Heart left ventricle (tissue), 16 donors: ENCODE measurements at regions of chr4 and their contacts with region 1.

Region 1: GRCh38 chr4:119314356-119314755 is 7.6 kb downstream of the FABP2 start:
- DNase-seq: no peak
- ATAC-seq: peak; percentile 75 to 85 (median 80)
- H3K4me3 ChIP-seq: no peak overlapping the region
- H3K27ac ChIP-seq: no peak overlapping the region
- H3K4me1 ChIP-seq: no peaks in the 10 kb centered on the region
- H3K27me3 ChIP-seq: no peaks in the 10 kb centered on the region
- CTCF ChIP-seq: peak; percentile 14 to 66 (median 56)
- POLR2A ChIP-seq: no peak

Region 2: GRCh38 chr4:119490335-119490734 is 176.0 kb after region 1 on chr4:
- intact Hi-C with region 1: loop called in 7 of 10 experiments (anchors 2 to 10 kb)
- DNase-seq: no peak
- ATAC-seq: peak in 2 of 4 donors; percentile 39 to 66
- H3K4me3 ChIP-seq: no peak overlapping the region
- H3K27ac ChIP-seq: no peak overlapping the region
- H3K4me1 ChIP-seq: no peaks in the 10 kb centered on the region
- H3K27me3 ChIP-seq: no peaks in the 10 kb centered on the region
- CTCF ChIP-seq: peak in 5 of 12 donors; percentile 15 to 39 (median 21)
- POLR2A ChIP-seq: no peak

Region 3: GRCh38 chr4:119498527-119498926 is 184.2 kb after region 1 on chr4:
- intact Hi-C with region 1: loop called in 7 of 10 experiments (anchors 2 to 10 kb)
- DNase-seq: peak in 2 of 5 donors; percentile 25 to 45
- ATAC-seq: peak in 3 of 4 donors; percentile 66 to 78 (median 75)
- H3K4me3 ChIP-seq: no peak overlapping the region
- H3K27ac ChIP-seq: peak overlapping the region in 9 of 12 donors; percentile 11 to 51 (median 32)
- H3K4me1 ChIP-seq: peaks cover 0 to 10% (median 0%) of the 10 kb centered on the region in 12 donors
- H3K27me3 ChIP-seq: no peaks in the 10 kb centered on the region
- CTCF ChIP-seq: no peak
- POLR2A ChIP-seq: no peak

Region 4: DNA sequence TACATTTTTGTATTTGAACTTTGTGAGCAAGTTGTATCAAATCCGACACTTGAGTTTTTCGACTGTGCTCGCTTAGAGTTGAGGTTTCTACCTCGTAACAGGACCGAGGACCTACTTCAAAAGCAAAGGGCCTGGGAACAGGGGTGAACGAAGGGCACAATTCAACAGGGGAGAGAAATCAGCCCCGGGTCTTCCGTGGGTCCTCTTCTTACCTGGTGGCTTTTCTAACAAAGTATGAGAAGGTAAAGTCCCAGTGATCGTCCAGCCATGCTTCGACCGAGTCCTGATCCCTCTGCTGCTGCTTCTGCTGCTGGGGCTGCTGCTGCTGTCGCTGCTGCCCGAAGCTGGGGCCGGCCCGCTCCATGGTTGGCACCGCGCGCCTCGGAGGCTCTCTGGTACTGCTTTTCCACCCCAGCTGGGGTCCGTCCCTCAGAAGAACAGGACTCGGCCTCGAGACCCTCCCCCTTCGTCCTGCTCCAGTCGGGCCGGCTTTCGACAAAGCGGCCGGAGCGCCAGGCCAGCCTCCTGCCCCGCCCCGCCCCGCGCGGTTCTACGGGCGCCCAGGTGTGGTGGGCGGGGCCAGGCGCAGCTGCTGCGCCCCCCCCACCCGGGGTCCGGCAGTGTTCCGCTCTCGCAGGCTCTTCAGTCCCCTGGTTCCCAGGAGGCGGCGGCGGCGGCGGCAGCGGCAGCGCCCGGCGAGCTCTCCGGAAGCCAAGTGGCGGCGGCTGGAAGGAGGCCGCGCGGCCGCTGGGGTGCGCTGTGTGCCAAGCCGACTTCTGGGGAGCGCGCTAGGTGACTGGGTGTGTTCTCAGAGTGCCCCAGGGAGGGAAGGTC is 314.2 kb after region 1 on chr4 and contains the start of gene PDE5A:
- intact Hi-C with region 1: loop called in 8 of 10 experiments (anchors 5 to 10 kb)
- DNase-seq: peak; percentile 76 to 90 (median 81)
- ATAC-seq: peak; percentile 78 to 94 (median 87)
- H3K4me3 ChIP-seq: peak within 1 kb of the TSS; percentile 51 to 87 (median 80)
- H3K27ac ChIP-seq: peak within 1 kb of the TSS; percentile 76 to 95 (median 87)
- H3K4me1 ChIP-seq: peaks cover 0 to 19% (median 3%) of the 10 kb centered on the region in 12 donors
- H3K27me3 ChIP-seq: peaks cover 0 to 35% (median 0%) of the 10 kb centered on the region in 9 donors
- CTCF ChIP-seq: peak; percentile 53 to 88 (median 78)
- POLR2A ChIP-seq: no peak
- total RNA-seq, gene PDE5A: 3.8 to 20.6 (median 10.0) TPM

Region 5: GRCh38 chr4:120056246-120056645 is 741.9 kb after region 1 on chr4:
- intact Hi-C with region 1: loop called in 9 of 10 experiments (anchors 5 to 10 kb)
- DNase-seq: no peak
- ATAC-seq: no peak
- H3K4me3 ChIP-seq: no peak overlapping the region
- H3K27ac ChIP-seq: no peak overlapping the region
- H3K4me1 ChIP-seq: peaks cover 0 to 14% (median 0%) of the 10 kb centered on the region in 12 donors
- H3K27me3 ChIP-seq: no peaks in the 10 kb centered on the region
- CTCF ChIP-seq: peak in 11 of 12 donors; percentile 9 to 53 (median 31)
- POLR2A ChIP-seq: no peak